HepG2 (cell line): ENCODE measurements at regions of chr2 and their contacts with region 1.

Region 1: DNA sequence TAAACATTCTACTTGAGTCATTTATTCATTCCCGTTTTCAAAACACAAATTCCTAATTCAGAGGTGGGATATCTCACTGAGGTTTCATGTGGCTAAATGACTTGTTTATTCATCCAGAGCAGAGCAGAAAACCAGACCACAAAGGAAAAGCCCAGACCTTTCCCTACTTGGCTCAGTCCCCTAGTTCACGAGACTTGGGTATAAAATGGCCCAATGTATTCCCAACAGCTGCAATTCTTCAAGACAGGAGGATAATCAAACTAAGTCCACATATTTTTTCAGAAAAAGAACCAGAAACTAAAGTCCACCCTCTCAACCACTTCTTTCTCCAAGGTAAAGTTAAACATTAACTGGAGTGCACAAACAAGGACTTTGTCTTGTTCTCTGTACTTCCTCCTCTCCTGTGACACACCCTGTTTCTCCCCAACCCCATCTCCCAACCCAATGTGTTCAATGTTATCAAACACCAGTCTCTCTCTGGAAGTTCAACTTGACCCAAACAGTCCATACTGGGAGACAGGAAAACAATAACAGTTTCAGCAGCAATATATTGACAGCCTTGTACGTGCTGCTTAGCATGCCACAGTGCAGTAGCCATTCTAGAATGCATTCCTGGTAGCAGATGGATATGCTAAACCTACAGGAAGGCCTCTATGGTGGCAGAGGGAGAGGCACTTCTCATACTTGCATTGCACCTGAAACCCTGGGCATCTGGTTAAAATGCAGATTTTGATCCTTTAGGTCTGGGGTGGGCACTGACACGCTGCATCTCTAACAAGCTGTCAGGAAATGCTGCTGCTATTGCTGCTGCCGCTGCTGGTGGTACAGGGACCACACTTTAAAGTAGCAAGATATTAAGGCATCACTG is 110.7 kb downstream of the INO80D start:
- DNase-seq: peak; percentile 100
- ATAC-seq: peak; percentile 99
- H3K4me3 ChIP-seq: peak overlapping the region in 1 of 3 experiments; percentile 33; a peak in 2 of 6 replicates
- H3K27ac ChIP-seq: peak overlapping the region; percentile 89
- H3K4me1 ChIP-seq: peaks cover 96% of the 10 kb centered on the region
- H3K27me3 ChIP-seq: no peaks in the 10 kb centered on the region
- CTCF ChIP-seq: peak; percentile 28; the same call in 1 of the 2 replicates
- EP300 ChIP-seq: peak; percentile 51 to 95; a peak in 2 of 4 replicates
- POLR2A ChIP-seq: peak in 1 of 2 experiments; percentile 62; a peak in 2 of 4 replicates
- RAD21 ChIP-seq: peak; percentile 17; the same call in 1 of the 2 replicates

Region 2: GRCh38 chr2:205947621-205948495 is 27.5 kb before region 1 on chr2:
- CTCF ChIA-PET with region 1: no interaction called
- POLR2A ChIA-PET with region 1: interaction called, 5 read pairs
- in situ Hi-C with region 1: no loop called
- intact Hi-C with region 1: loop called (anchors 2 kb)
- DNase-seq: peak; percentile 68
- ATAC-seq: peak; percentile 71
- H3K4me3 ChIP-seq: peak overlapping the region; percentile 14 to 43 (median 29); a peak in 4 of 6 replicates
- H3K27ac ChIP-seq: no peak overlapping the region
- H3K4me1 ChIP-seq: peaks cover 77% of the 10 kb centered on the region
- H3K27me3 ChIP-seq: 0 out of 5 replicates have a peak, but pooled peaks cover 0 to 2% of the 10 kb centered on the region in 2 experiments
- CTCF ChIP-seq: peak; percentile 97
- EP300 ChIP-seq: peak in 1 of 2 experiments; percentile 27; a peak in 1 of 4 replicates
- POLR2A ChIP-seq: no peak
- RAD21 ChIP-seq: peak; percentile 92

Region 3: GRCh38 chr2:205989271-205990071 is 14.2 kb after region 1 on chr2:
- CTCF ChIA-PET with region 1: no interaction called
- POLR2A ChIA-PET with region 1: no interaction called
- in situ Hi-C with region 1: no loop called
- intact Hi-C with region 1: loop called (anchors 2 kb)
- DNase-seq: peak; percentile 48
- ATAC-seq: peak; percentile 69
- H3K4me3 ChIP-seq: no peak overlapping the region
- H3K27ac ChIP-seq: no peak overlapping the region
- H3K4me1 ChIP-seq: peaks cover 44% of the 10 kb centered on the region
- H3K27me3 ChIP-seq: no peaks in the 10 kb centered on the region
- CTCF ChIP-seq: no peak
- EP300 ChIP-seq: peak in 1 of 2 experiments; percentile 38; a peak in 1 of 4 replicates
- POLR2A ChIP-seq: no peak
- RAD21 ChIP-seq: no peak

Region 4: DNA sequence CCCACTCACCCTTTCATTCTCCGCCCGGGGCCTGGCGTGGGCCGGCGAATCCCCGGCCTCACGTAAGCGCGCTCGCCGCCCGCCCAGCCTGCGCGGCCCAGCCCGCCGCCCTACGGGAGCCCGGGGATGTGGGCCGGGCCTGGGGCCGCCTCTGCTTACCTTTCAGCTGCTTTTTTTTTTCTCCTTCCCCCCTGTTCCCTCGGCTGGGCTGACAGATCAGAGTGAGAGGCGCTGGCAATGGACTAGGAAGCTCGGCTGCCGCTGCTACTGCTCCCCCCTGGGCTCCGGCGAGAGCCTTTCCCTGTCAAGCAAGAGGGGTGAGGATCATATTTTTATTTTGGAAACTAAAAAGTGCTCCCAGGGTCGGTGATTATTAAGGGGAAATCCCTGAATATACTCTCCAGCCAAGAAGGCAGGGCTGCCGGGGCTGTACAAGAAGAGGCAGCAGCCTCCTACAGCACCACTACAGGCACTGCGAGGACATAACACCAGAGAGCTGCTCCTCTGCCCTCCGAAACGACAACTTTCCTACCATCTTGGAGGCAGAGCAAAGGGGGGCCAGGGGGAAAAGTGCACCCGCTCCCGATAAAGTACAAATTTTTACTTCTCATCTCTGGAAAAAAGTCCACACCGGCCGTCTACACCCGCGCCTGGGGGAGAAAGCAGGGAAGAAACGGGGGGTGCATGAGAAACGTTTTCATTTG is 110.6 kb after region 1 on chr2 and contains the start of gene INO80D:
- CTCF ChIA-PET with region 1: no interaction called
- POLR2A ChIA-PET with region 1: interaction called, 9 read pairs
- in situ Hi-C with region 1: no loop called
- intact Hi-C with region 1: loop called (anchors 2 kb)
- DNase-seq: peak; percentile 87
- ATAC-seq: peak; percentile 92
- H3K4me3 ChIP-seq: peak within 1 kb of the TSS; percentile 73 to 100 (median 84)
- H3K27ac ChIP-seq: peak within 1 kb of the TSS; percentile 100
- H3K4me1 ChIP-seq: peaks cover 36% of the 10 kb centered on the region
- H3K27me3 ChIP-seq: no peaks in the 10 kb centered on the region; a peak in 2 of 5 replicates
- CTCF ChIP-seq: peak; percentile 57
- EP300 ChIP-seq: peak in 1 of 2 experiments; percentile 3; a peak in 1 of 4 replicates
- POLR2A ChIP-seq: peak; percentile 81 to 95
- RAD21 ChIP-seq: peak; percentile 22; the same call in 1 of the 2 replicates
- total RNA-seq, gene INO80D: 7.9 and 13.6 TPM in 2 replicates

Region 5: GRCh38 chr2:206159346-206160124 is 184.2 kb after region 1 on chr2 and contains the starts of genes EEF1B2 and NDUFS1:
- CTCF ChIA-PET with region 1: no interaction called
- POLR2A ChIA-PET with region 1: no interaction called
- in situ Hi-C with region 1: no loop called
- intact Hi-C with region 1: loop called (anchors 1 kb)
- DNase-seq: peak; percentile 98
- ATAC-seq: peak; percentile 88
- H3K4me3 ChIP-seq: peak within 1 kb of the TSS; percentile 87 to 90 (median 87)
- H3K27ac ChIP-seq: peak within 1 kb of the TSS; percentile 80
- H3K4me1 ChIP-seq: peaks cover 53% of the 10 kb centered on the region
- H3K27me3 ChIP-seq: no peaks in the 10 kb centered on the region; a peak in 1 of 5 replicates
- CTCF ChIP-seq: peak; percentile 18; the same call in 1 of the 2 replicates
- EP300 ChIP-seq: peak in 1 of 2 experiments; percentile 46; a peak in 1 of 4 replicates
- POLR2A ChIP-seq: peak; percentile 77 to 91
- RAD21 ChIP-seq: peak; percentile 23; the same call in 1 of the 2 replicates
- total RNA-seq, gene EEF1B2: 1,731 and 2,041 TPM in 2 replicates
- total RNA-seq, gene NDUFS1: 242 and 396 TPM in 2 replicates